AG04449 (cell line): ENCODE measurements at regions of chr2 and their contacts with region 1.

Region 1: GRCh38 chr2:71510196-71510807 is 56.9 kb downstream of the DYSF start:
- DNase-seq: no peak
- H3K4me3 ChIP-seq: no peak overlapping the region
- CTCF ChIP-seq: peak; percentile 90

Region 2: GRCh38 chr2:71299507-71299906 is 210.8 kb before region 1 on chr2:
- CTCF ChIA-PET with region 1: interaction called, 376 read pairs
- POLR2A ChIA-PET with region 1: no interaction called
- DNase-seq: no peak
- H3K4me3 ChIP-seq: no peak overlapping the region
- CTCF ChIP-seq: peak; percentile 31

Region 3: GRCh38 chr2:71331581-71332434 is 178.5 kb before region 1 on chr2 and contains the start of gene ZNF638:
- CTCF ChIA-PET with region 1: interaction called, 18 read pairs
- POLR2A ChIA-PET with region 1: no interaction called
- DNase-seq: peak; percentile 16
- H3K4me3 ChIP-seq: peak within 1 kb of the TSS; percentile 99
- CTCF ChIP-seq: peak; percentile 62

Region 4: GRCh38 chr2:71498261-71498701 is 12.0 kb before region 1 on chr2:
- CTCF ChIA-PET with region 1: interaction called, 23 read pairs
- POLR2A ChIA-PET with region 1: no interaction called
- DNase-seq: peak; percentile 82
- H3K4me3 ChIP-seq: no peak overlapping the region
- CTCF ChIP-seq: no peak